ENCODE measurements at regions of chr9 and their contacts with region 1.

Region 1: DNA sequence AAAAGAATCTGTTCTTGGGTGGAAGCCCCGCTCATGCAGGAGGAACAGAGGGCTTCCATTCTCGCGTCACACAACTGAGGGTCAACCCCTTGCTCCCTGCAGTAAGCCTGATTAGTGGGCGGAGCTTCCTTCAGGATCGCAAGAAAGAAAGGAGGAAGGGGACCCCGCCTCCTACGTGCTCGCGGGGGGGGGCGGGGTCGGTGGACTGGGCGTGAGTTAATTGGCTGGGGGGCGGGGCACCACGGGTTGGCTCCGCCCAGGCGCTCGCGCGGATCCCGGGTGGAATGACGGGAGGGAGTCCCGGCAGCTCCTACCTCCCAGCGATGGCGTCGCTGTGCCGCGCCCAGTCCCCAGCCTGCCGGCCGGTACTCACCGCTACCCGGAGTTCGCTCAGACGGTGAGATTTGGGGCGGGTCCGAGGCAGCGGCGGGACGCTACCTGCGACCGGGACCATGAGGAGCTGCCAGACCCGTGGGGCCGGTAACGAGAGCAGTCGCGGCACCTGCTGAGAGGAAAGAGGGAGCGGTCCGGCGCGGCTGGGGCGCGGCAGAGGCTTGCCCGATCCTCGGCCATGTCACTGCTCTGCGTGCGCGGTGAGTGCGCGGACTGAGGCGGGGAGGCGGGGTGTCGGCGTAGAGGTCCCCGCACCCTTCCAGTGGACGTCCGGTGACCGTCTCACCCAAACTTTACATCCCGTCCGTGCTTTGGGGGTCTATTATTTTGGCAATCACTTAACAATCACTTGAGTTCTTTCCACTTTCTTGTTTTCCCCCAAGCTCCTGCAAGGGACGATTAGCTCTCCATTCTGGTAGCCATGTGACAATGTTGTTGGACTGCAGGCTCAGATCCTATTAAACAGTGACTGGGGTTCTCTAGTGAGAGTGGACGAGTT is at the start of gene UNC13B:
- ATAC-seq: peak; percentile 93 to 97 (median 96)
- H3K4me3 ChIP-seq: peak within 1 kb of the TSS; percentile 70 to 98 (median 70)
- H3K27ac ChIP-seq: peak within 1 kb of the TSS; percentile 93 to 94
- H3K4me1 ChIP-seq: peaks cover 12 to 14% of the 10 kb centered on the region in 2 donors
- total RNA-seq, gene UNC13B: 32.3 to 71.1 (median 53.4) TPM

Region 2: DNA sequence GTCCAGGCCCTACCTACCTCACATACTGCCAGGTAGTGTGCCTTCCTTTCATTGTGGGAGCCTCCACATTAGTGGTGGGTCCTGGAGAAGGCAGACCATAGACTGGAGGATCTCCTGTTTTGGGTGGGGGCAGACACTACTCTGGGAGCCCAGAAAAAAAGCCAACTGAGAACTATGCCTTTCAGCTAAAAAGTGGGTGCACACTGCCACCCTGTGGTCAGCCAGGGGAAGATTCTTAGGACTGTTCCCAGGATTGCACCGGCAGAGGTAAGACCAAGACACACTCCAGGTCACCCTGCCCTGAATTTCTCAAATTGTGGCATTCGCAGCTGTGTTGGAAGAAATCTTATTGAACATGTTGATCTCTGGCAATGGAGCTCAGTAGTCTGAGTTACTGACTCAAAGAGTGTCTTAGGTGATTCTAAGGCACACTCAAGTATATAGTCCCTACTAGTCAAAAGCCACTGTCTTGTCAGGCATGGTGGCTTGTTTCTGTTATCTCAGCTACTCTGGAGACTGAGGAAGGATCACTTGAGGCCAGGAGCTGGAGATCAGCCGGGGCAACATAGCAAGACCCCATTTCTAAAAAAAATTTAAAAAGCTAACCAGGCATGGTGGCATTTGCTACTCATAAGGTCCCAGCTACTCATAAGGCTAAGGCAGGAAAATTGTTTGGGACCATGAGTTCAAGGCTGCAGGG is 528.0 kb before region 1 on chr9:
- in situ Hi-C with region 1: no loop called
- ATAC-seq: peak in 6 of 8 experiments; percentile 4 to 21 (median 8)
- H3K4me3 ChIP-seq: no peak overlapping the region
- H3K27ac ChIP-seq: no peak overlapping the region
- H3K4me1 ChIP-seq: peaks cover 10 to 16% of the 10 kb centered on the region in 2 donors

Region 3: DNA sequence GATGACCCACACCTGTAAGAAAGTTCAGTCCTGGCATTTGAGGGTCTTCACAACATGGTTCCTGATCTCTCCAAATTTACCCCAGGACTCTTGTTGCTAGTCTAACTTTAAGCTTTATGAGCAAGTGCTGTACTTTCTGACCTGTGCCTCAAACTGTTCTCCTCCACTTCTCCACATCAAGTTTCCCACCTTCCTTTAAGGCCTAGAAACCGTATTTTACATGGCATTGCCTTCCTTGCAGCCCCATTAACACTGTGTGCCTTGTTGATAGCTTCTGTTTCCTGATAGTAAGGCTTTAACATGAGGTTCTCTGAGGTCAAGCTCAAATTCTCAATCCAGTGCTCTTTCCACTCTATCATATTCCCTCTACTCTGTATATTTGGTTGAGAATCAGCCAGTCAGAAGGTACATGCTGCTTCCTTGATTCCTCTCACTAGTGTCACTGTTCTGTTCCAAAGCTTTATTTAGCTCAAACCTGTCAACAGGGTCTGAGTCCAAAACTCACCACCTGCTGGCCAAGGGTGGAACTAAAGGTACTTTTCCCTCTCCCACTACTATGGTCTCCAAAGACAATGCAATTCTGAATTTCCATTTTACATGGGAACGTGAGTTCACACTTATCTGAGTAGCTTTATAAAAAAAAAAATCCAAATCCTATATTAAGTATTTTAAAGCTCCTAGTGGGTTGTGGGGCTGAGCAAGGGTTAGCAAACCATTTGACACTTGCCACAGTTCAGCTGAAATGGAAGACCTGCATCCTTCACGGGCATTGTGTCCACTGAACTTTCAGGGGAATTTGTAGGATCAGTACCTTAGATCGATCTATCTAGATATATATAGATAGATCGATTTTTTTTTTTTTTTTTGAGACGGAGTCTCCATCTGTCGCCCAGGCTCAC is 110.6 kb before region 1 on chr9:
- in situ Hi-C with region 1: no loop called
- ATAC-seq: peak in 4 of 8 experiments; percentile 36 to 66 (median 50)
- H3K4me3 ChIP-seq: no peak overlapping the region
- H3K27ac ChIP-seq: no peak overlapping the region
- H3K4me1 ChIP-seq: no peaks in the 10 kb centered on the region

Region 4: GRCh38 chr9:35258676-35259474 is 96.9 kb after region 1 on chr9:
- in situ Hi-C with region 1: loop called in 1 of 9 experiments (anchors 25 kb)
- ATAC-seq: peak; percentile 64 to 100 (median 79)
- H3K4me3 ChIP-seq: no peak overlapping the region
- H3K27ac ChIP-seq: no peak overlapping the region
- H3K4me1 ChIP-seq: peaks cover 15 to 17% of the 10 kb centered on the region in 2 donors

Region 5: DNA sequence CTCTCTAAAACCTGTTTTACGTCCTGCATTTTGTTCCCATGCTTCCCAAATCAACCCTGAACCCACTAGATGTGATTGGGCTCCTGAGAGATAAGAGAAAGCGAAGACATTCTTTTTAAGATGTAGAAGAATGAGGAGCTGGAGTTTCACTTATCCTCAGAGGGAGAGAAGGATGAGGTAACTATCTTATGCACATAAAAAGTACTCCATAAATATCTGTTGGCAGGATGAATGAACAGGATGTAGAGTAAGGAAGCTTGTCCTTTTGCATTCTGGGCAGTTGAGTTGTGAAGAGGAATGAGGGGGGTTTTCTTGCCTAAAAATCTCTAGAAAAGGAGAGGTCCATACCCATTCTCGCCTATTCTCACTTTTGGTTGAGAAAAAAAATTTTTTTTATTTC is 163.0 kb after region 1 on chr9:
- in situ Hi-C with region 1: no loop called
- ATAC-seq: peak in 3 of 8 experiments; percentile 54 to 94 (median 84)
- H3K4me3 ChIP-seq: no peak overlapping the region
- H3K27ac ChIP-seq: no peak overlapping the region
- H3K4me1 ChIP-seq: no peaks in the 10 kb centered on the region